IMR-90 (cell line): ENCODE measurements at regions of chr2 and their contacts with region 1.

Region 1: DNA sequence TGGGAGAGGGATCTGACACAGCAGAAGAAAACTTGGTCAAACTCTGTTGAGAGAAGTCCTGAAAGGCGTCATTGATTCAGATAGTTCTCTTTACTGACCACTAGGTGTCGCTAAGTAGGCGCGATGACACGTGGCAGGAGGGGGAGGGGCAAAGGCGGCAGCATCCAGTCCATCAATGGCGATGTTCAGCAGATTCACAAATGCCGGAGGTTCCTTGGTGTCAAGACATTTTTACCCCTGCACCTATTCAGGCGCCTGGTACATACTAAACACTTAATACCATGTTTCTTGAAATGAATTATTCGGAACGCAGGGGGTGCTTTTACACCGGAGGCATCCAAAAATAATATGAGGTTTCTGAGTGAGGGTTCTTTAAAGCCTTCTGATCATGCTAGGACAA is 3.0 kb upstream of the PLEK start:
- DNase-seq: peak; percentile 50
- ATAC-seq: peak; percentile 73
- H3K4me3 ChIP-seq: no peak overlapping the region
- H3K27ac ChIP-seq: no peak overlapping the region
- H3K4me1 ChIP-seq: no peaks in the 10 kb centered on the region
- H3K27me3 ChIP-seq: peaks cover 3% of the 10 kb centered on the region; the same call in 1 of the 2 replicates
- CTCF ChIP-seq: peak; percentile 69
- POLR2A ChIP-seq: no peak
- RAD21 ChIP-seq: peak; percentile 51

Region 2: GRCh38 chr2:68423966-68424650 is 62.0 kb after region 1 on chr2:
- CTCF ChIA-PET with region 1: no interaction called
- POLR2A ChIA-PET with region 1: no interaction called
- dilution Hi-C with region 1: no loop called
- in situ Hi-C with region 1: no loop called
- intact Hi-C with region 1: loop called (anchors 5 kb)
- DNase-seq: no peak
- ATAC-seq: no peak
- H3K4me3 ChIP-seq: no peak overlapping the region
- H3K27ac ChIP-seq: no peak overlapping the region
- H3K4me1 ChIP-seq: peaks cover 2% of the 10 kb centered on the region; the same call in 1 of the 2 replicates
- H3K27me3 ChIP-seq: peaks cover 30% of the 10 kb centered on the region
- CTCF ChIP-seq: no peak
- POLR2A ChIP-seq: no peak
- RAD21 ChIP-seq: no peak